ENCODE measurements at regions of chr5 and their contacts with region 1.

Region 1: DNA sequence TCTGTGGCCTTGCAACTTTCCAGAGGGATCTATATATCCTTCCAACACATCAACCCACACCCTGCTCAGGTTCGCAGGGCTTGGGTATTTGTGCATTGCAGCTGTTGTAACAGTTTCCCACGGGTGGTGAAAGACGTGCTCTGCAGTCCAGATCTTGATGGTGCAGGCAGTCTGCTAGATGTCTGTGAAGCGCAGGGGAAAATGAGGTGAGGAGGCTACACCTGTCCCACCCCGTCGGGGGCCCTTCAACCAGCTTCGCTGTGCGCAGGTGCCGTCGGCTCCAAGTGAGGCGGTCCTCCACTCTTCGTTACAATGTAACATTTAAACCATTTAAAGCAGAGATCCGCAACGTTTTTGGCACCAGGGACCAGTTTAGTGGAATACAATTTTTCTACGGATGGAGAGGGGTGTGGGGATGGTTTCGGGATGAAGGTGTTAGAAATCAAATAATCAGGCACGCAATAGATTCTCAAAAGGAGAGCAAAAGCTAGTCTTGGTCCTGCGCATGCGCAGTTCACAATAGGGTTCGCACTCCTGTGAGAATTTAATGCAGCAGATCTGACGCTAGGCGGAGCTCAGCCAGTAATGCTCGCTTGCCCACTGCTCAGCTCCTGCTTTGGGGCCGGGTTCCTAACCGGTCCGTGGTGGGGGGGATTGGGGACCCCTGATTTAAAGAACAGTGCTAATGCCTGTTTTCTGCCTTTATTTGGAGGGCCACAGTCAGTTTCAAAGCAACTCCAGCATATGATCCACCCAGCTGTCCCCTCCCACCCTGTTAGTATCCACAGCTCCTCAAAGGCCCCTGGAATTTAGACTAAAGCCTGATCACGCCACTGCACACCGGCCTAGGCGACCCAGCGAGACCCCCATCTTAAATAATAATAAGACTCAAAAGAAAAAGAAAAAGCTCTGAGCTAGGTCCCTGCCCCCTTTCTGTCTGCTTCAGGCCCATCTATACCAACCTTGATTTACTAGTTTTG is 97.1 kb upstream of the SELENOP start:
- DNase-seq: peak; percentile 87 to 89
- ATAC-seq: peak; percentile 91 to 97 (median 94)
- H3K4me3 ChIP-seq: peak overlapping the region; percentile 1 to 77 (median 56)
- H3K27ac ChIP-seq: peak overlapping the region in 1 of 10 donors; percentile 16
- H3K4me1 ChIP-seq: peaks cover 0 to 13% (median 4%) of the 10 kb centered on the region in 9 donors
- H3K27me3 ChIP-seq: peaks cover 0 to 20% (median 18%) of the 10 kb centered on the region in 7 donors
- CTCF ChIP-seq: peak; percentile 55 to 88 (median 84)

Region 2: DNA sequence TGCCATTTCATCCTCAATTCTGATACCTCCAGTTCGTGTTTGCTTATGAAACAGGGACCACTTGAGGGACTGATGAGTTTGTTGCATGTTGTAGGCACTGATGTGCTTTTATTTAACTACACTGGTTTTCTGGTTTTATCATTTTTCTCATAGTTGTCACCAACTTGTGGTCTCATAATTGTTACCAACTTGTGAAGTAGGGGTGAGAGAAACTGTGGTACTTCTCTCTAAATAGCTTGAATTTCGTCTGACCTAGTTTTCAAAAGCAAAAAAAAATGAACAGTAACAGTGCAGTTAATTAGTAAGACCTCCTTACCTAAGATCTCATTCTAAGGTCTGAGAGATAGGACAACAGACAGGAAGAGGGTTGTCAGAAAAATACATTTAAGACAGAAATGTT is 53.3 kb after region 1 on chr5:
- intact Hi-C with region 1: loop called in 1 of 10 experiments (anchors 10 kb)
- DNase-seq: no peak
- ATAC-seq: no peak
- H3K4me3 ChIP-seq: no peak overlapping the region
- H3K27ac ChIP-seq: no peak overlapping the region
- H3K4me1 ChIP-seq: no peaks in the 10 kb centered on the region
- H3K27me3 ChIP-seq: peaks cover 0 to 35% (median 11%) of the 10 kb centered on the region in 7 donors
- CTCF ChIP-seq: no peak

Region 3: DNA sequence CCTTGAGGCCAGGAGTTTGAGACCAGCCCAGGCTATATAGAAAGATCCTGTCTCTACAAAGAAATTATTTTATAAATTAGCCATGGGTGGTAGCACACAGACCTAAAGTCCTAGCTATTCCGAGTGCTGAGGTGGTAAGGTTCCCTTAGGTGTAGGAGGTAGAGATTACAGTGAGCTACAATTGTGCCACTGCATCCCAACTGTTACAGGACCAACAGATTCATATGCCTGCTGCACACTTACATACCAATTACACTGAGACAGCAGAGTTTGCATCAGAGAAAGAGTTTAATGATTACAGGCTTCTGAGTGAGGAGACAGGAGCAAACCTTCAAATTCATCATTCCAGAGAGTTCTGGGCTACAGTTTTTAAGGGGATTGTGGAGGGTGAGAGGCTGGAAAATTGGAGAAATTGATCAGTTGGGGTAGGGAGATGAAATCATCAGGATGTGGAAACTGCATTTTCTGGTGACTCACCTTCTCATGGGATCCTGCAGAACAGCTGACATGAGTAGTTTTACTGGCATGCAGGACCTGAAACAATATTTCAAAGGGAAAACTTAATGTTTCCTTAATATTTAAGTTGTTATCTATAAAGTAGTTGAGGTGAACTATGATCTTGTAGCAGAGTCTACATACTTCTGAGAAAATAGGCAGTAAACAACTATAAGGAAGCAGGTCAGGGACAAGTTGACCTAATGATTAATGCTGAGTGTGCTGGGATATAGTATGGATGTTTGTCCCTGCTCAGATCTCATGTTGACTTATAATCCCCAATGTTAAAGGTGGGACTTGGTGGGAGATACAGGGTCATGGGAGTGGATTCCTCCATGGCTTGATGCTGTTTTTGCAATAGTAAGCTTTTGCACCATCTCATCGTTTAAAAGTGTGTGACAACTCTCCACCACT is 76.6 kb after region 1 on chr5:
- intact Hi-C with region 1: loop called in 2 of 10 experiments (anchors 5 to 10 kb)
- DNase-seq: no peak
- ATAC-seq: no peak
- H3K4me3 ChIP-seq: no peak overlapping the region
- H3K27ac ChIP-seq: no peak overlapping the region
- H3K4me1 ChIP-seq: peaks cover 0 to 53% (median 1%) of the 10 kb centered on the region in 9 donors
- H3K27me3 ChIP-seq: peaks cover 0 to 65% (median 12%) of the 10 kb centered on the region in 7 donors
- CTCF ChIP-seq: no peak

Region 4: GRCh38 chr5:43040287-43041098 is 131.7 kb after region 1 on chr5 and contains the start of gene ANXA2R:
- intact Hi-C with region 1: loop called in 6 of 10 experiments (anchors 2 to 5 kb)
- DNase-seq: peak; percentile 80 to 91
- ATAC-seq: peak; percentile 59 to 74 (median 66)
- H3K4me3 ChIP-seq: peak within 1 kb of the TSS; percentile 47 to 73 (median 67)
- H3K27ac ChIP-seq: peak within 1 kb of the TSS; percentile 93 to 98 (median 96)
- H3K4me1 ChIP-seq: peaks cover 0 to 75% (median 17%) of the 10 kb centered on the region in 9 donors
- H3K27me3 ChIP-seq: peaks cover 0 to 73% (median 35%) of the 10 kb centered on the region in 7 donors
- CTCF ChIP-seq: peak; percentile 64 to 87 (median 79)
- total RNA-seq, gene ANXA2R: 0.42 to 1.8 (median 0.87) TPM

Region 5: DNA sequence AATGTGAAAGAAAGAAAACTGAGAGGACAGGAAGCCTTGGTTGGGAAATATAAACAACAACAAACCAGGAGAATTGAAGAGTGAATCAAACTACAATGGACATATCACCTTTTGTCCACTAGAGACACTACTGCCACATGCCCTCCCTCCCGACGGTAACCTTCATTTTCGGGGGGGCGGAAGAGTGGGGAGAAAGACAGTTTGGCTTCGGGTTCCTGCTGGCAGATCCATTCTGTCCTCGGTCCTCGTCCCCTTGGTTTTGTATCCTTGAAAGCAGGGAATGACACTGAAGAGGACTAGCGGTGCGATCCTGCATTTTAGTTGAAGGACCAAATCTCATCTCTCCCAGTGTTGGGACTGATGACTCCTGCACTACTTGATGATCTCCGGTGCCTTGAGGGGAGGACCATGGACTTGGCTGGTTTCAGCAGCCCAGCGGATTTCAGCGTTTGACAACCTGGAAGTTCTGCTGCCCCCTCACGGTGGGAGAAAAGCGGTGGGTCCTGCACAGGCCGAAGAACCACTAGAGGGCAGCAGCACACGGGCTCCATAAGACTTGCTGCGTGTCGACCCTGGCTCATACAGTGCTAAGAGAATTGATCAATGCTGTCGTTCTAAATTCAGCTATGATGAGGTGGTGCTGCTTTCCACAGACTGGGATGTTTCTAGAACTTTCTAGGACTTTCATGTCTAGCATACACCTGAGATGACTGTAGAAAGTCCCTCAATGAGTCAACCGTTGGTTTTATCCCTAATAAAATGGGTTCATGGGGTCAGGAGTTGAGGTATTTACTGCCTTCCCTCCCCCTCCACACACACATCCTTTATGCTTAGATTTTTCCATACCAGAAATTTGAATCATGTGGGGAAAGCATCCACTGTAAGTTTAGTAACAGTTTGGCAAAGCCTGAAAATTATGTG is 196.8 kb after region 1 on chr5:
- intact Hi-C with region 1: loop called in 4 of 10 experiments (anchors 2 to 10 kb)
- DNase-seq: peak; percentile 87 to 90
- ATAC-seq: peak; percentile 90 to 97 (median 95)
- H3K4me3 ChIP-seq: peak overlapping the region in 9 of 10 donors; percentile 26 to 58 (median 48)
- H3K27ac ChIP-seq: peak overlapping the region in 9 of 10 donors; percentile 42 to 76 (median 53)
- H3K4me1 ChIP-seq: peaks cover 0 to 10% (median 5%) of the 10 kb centered on the region in 9 donors
- H3K27me3 ChIP-seq: no peaks in the 10 kb centered on the region
- CTCF ChIP-seq: peak; percentile 97 to 100 (median 100)

Measured in heart right ventricle (tissue), 16 donors.